Ovary (tissue), 10 donors: ENCODE measurements at regions of chr12 and their contacts with region 1.

Region 1: GRCh38 chr12:9750276-9751203 is 10.2 kb downstream of the CD69 start:
- DNase-seq: peak; percentile 15 to 38 (median 25)
- H3K4me3 ChIP-seq: no peak overlapping the region
- H3K27ac ChIP-seq: no peak overlapping the region
- H3K4me1 ChIP-seq: no peaks in the 10 kb centered on the region
- H3K27me3 ChIP-seq: no peaks in the 10 kb centered on the region
- CTCF ChIP-seq: peak; percentile 54 to 65 (median 57)
- EP300 ChIP-seq: no peak
- POLR2A ChIP-seq: no peak

Region 2: DNA sequence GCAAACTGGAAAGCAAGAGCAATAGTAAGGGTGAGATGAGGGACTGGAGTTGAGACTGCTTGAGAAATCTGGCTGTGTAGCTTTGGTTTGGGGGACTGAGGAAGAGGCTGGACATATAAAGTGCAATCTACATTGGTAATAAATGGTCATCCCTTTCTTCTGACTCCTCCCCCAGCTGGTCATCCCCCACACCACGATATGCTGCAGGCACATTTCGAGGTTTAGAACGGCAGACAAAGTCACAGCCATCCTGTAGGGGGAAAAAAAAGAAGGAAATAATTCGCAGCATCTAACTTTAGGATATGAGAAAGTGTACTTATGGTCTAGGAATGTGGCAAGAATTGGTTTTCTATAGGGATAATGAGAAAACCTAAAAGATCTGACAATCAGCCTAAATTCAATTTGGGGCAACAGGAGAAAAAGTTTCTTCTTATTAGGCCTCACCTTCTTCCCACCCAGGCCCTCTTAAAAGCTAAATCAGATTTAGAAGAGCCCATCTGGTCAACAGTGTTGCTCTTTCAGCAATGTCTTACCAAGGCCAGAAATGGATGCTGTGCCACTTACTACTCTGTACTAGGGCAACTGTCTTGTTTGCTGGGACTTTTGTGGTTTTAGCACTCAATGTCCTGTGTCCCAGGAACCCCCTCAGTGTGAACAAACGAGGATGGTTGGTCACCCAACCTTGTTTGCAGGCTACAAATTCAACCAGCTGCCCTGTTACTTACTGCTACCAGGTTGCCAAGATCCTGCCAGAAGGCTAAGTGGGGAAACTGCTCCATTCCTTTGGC is 808.7 kb before region 1 on chr12:
- intact Hi-C with region 1: no loop called
- DNase-seq: no peak
- H3K4me3 ChIP-seq: no peak overlapping the region
- H3K27ac ChIP-seq: no peak overlapping the region
- H3K4me1 ChIP-seq: no peaks in the 10 kb centered on the region
- H3K27me3 ChIP-seq: no peaks in the 10 kb centered on the region
- CTCF ChIP-seq: no peak
- EP300 ChIP-seq: no peak
- POLR2A ChIP-seq: no peak

Region 3: DNA sequence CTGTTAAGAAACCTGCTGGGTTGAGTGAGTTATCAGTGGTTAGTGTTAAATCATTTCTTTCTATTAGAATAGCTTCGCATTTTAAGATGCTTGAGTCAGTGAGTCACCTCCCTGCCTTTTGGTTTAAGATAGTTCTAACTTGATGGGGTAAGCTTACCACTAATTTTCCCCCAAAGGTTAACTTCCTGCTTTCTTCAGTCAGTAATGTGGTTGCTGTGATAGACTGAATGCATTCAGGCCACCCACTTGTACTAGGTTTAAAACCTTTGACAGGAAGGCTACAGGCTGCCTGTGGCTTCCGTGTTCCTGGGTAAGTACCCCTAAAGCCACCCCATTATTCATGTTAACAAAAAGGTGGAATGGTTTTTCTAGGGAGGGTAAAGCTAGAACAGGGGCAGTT is 156.3 kb after region 1 on chr12:
- intact Hi-C with region 1: loop called in 1 of 4 experiments (anchors 10 kb)
- DNase-seq: no peak
- H3K4me3 ChIP-seq: no peak overlapping the region
- H3K27ac ChIP-seq: no peak overlapping the region
- H3K4me1 ChIP-seq: no peaks in the 10 kb centered on the region
- H3K27me3 ChIP-seq: no peaks in the 10 kb centered on the region
- CTCF ChIP-seq: no peak
- EP300 ChIP-seq: no peak
- POLR2A ChIP-seq: no peak

Region 4: GRCh38 chr12:9933958-9934357 is 183.4 kb after region 1 on chr12:
- intact Hi-C with region 1: loop called in 2 of 4 experiments (anchors 5 kb)
- DNase-seq: no peak
- H3K4me3 ChIP-seq: no peak overlapping the region
- H3K27ac ChIP-seq: no peak overlapping the region
- H3K4me1 ChIP-seq: no peaks in the 10 kb centered on the region
- H3K27me3 ChIP-seq: no peaks in the 10 kb centered on the region
- CTCF ChIP-seq: no peak
- EP300 ChIP-seq: no peak
- POLR2A ChIP-seq: no peak